PC-3 (cell line): ENCODE measurements at regions of chr6 and their contacts with region 1.

Region 1: GRCh38 chr6:72238900-72239299 is 352.6 kb downstream of the RIMS1 start:
- DNase-seq: peak; percentile 77
- ATAC-seq: peak; percentile 99
- H3K4me3 ChIP-seq: no peak overlapping the region
- H3K27ac ChIP-seq: no peak overlapping the region
- H3K4me1 ChIP-seq: peaks cover 12% of the 10 kb centered on the region
- H3K27me3 ChIP-seq: no peaks in the 10 kb centered on the region
- CTCF ChIP-seq: no peak

Region 2: DNA sequence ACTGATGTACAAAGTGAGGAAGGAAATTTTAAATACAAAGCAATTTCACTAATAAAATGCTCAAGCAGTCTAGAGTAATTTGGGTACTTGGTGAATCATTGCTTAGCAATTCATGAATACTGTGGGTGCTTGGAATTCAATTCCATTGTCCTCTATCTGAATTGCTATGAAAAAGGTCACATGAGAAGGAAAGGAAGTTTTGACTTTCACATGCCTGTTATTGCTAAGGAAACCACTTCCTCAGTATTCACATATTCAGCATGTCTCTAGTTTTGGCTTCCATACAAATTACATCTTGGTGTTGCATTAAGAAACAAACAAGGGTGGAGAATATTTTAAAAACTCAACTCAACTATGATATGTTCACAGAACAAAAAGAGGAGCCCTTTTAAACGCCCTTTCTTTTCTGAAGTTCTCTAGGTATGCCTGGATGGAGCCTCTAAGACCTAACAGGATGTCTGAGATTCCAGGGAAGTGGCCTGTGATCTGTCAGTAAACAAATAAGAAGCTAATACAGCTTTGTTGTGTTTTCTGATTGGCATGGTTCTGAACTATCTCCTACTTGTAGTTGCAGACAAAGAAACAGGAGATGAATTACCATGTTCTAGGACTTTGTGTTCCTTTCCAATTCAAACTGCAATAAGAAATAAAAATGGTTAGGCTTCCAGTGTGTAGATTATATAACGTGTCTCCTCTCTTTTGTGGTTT is 759.9 kb before region 1 on chr6:
- CTCF ChIA-PET with region 1: no interaction called
- POLR2A ChIA-PET with region 1: no interaction called
- intact Hi-C with region 1: no loop called
- DNase-seq: peak; percentile 79
- ATAC-seq: peak; percentile 83
- H3K4me3 ChIP-seq: peak overlapping the region; percentile 13; the same call in 1 of the 2 replicates
- H3K27ac ChIP-seq: peak overlapping the region; percentile 66
- H3K4me1 ChIP-seq: peaks cover 25% of the 10 kb centered on the region
- H3K27me3 ChIP-seq: no peaks in the 10 kb centered on the region
- CTCF ChIP-seq: no peak

Region 3: GRCh38 chr6:72260489-72260888 is 21.6 kb after region 1 on chr6:
- CTCF ChIA-PET with region 1: no interaction called
- POLR2A ChIA-PET with region 1: no interaction called
- intact Hi-C with region 1: loop called (anchors 1 kb)
- DNase-seq: peak; percentile 48
- ATAC-seq: peak; percentile 89
- H3K4me3 ChIP-seq: no peak overlapping the region
- H3K27ac ChIP-seq: peak overlapping the region; percentile 9; the same call in 1 of the 2 replicates
- H3K4me1 ChIP-seq: peaks cover 16% of the 10 kb centered on the region; the same call in 1 of the 2 replicates
- H3K27me3 ChIP-seq: no peaks in the 10 kb centered on the region
- CTCF ChIP-seq: no peak